Activated CD4-positive, alpha-beta memory T cell treated with anti-CD3 and anti-CD28 coated beads for 36 hours (primary cell): ENCODE measurements at regions of chr19 and their contacts with region 1.

Region 1: GRCh38 chr19:49391581-49392399 is 3.7 kb downstream of the KASH5 start:
- DNase-seq: peak; percentile 86
- H3K4me3 Mint-ChIP-seq: no peak overlapping the region
- H3K27ac Mint-ChIP-seq: peak overlapping the region; percentile 30
- H3K4me1 Mint-ChIP-seq: peaks cover 19% of the 10 kb centered on the region
- H3K27me3 Mint-ChIP-seq: peaks cover 2% of the 10 kb centered on the region

Region 2: GRCh38 chr19:49407482-49408015 is 15.8 kb after region 1 on chr19:
- CTCF ChIA-PET with region 1: interaction called, 17 read pairs
- POLR2A ChIA-PET with region 1: no interaction called
- intact Hi-C with region 1: no loop called
- DNase-seq: no peak
- H3K4me3 Mint-ChIP-seq: no peak overlapping the region
- H3K27ac Mint-ChIP-seq: no peak overlapping the region
- H3K4me1 Mint-ChIP-seq: peaks cover 47% of the 10 kb centered on the region
- H3K27me3 Mint-ChIP-seq: no peaks in the 10 kb centered on the region

Region 3: GRCh38 chr19:49417090-49417489 is 25.3 kb after region 1 on chr19:
- CTCF ChIA-PET with region 1: interaction called, 10 read pairs
- POLR2A ChIA-PET with region 1: no interaction called
- intact Hi-C with region 1: no loop called
- DNase-seq: no peak
- H3K4me3 Mint-ChIP-seq: no peak overlapping the region
- H3K27ac Mint-ChIP-seq: no peak overlapping the region
- H3K4me1 Mint-ChIP-seq: peaks cover 18% of the 10 kb centered on the region
- H3K27me3 Mint-ChIP-seq: peaks cover 26% of the 10 kb centered on the region

Region 4: GRCh38 chr19:49430678-49431329 is 39.0 kb after region 1 on chr19:
- CTCF ChIA-PET with region 1: interaction called, 17 read pairs
- POLR2A ChIA-PET with region 1: no interaction called
- intact Hi-C with region 1: loop called (anchors 1 kb)
- DNase-seq: peak; percentile 52
- H3K4me3 Mint-ChIP-seq: no peak overlapping the region
- H3K27ac Mint-ChIP-seq: no peak overlapping the region
- H3K4me1 Mint-ChIP-seq: peaks cover 33% of the 10 kb centered on the region
- H3K27me3 Mint-ChIP-seq: peaks cover 80% of the 10 kb centered on the region

Region 5: DNA sequence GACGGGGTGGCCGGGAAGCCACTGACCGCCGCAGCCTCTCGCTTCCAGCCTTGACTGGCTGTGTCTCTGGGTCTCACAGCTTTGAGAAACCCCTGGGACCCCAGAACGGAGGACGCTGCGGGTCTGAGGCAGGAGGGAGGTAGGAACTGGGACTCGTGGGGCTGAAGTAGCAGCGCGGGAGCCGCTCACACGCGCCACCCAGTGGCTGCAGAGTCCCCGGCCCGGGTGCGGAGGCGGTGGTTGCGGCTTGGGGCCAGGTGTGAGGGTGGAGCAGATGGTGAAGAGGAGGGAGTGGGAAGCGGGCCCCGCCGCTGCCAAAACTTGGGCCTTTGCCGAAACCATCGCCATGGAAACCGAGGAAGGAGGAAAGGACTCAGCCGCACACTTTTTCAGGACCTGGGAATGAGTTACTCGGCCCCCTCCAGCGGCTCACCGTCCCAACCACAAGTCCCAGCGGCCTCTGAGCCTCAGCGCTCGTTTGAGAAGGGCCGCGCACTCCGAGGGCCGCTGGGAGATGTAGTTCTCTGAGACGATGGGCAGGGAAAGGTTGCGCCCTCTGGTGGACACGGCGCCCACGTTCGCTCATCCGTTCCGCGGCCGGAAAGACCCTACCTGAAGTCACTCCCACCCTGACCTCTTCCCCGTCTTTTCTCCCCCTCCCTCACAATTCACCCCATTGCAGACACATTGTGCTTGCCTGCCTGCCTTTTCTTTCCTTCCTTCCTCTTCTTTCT is 51.7 kb after region 1 on chr19:
- CTCF ChIA-PET with region 1: interaction called, 48 read pairs
- POLR2A ChIA-PET with region 1: interaction called, 3 read pairs
- intact Hi-C with region 1: loop called (anchors 1 kb)
- DNase-seq: peak; percentile 96
- H3K4me3 Mint-ChIP-seq: peak overlapping the region; percentile 74
- H3K27ac Mint-ChIP-seq: peak overlapping the region; percentile 82
- H3K4me1 Mint-ChIP-seq: peaks cover 33% of the 10 kb centered on the region
- H3K27me3 Mint-ChIP-seq: peaks cover 36% of the 10 kb centered on the region